Prostate gland (tissue), 2 donors: ENCODE measurements at regions of chr1 and their contacts with region 1.

Region 1: GRCh38 chr1:66331657-66332547 is 202.1 kb upstream of the SGIP1 start:
- DNase-seq: peak; percentile 85
- H3K4me3 ChIP-seq: peak overlapping the region; percentile 46 to 49
- H3K27ac ChIP-seq: peak overlapping the region; percentile 88
- H3K4me1 ChIP-seq: peaks cover 3% of the 10 kb centered on the region
- H3K27me3 ChIP-seq: no peaks in the 10 kb centered on the region
- CTCF ChIP-seq: peak in 2 of 4 experiments; percentile 50 to 52
- POLR2A ChIP-seq: peak; percentile 34

Region 2: GRCh38 chr1:66214901-66215300 is 117.0 kb before region 1 on chr1:
- intact Hi-C with region 1: no loop called
- DNase-seq: no peak
- H3K4me3 ChIP-seq: no peak overlapping the region
- H3K27ac ChIP-seq: no peak overlapping the region
- H3K4me1 ChIP-seq: no peaks in the 10 kb centered on the region
- H3K27me3 ChIP-seq: no peaks in the 10 kb centered on the region
- CTCF ChIP-seq: no peak
- POLR2A ChIP-seq: no peak

Region 3: DNA sequence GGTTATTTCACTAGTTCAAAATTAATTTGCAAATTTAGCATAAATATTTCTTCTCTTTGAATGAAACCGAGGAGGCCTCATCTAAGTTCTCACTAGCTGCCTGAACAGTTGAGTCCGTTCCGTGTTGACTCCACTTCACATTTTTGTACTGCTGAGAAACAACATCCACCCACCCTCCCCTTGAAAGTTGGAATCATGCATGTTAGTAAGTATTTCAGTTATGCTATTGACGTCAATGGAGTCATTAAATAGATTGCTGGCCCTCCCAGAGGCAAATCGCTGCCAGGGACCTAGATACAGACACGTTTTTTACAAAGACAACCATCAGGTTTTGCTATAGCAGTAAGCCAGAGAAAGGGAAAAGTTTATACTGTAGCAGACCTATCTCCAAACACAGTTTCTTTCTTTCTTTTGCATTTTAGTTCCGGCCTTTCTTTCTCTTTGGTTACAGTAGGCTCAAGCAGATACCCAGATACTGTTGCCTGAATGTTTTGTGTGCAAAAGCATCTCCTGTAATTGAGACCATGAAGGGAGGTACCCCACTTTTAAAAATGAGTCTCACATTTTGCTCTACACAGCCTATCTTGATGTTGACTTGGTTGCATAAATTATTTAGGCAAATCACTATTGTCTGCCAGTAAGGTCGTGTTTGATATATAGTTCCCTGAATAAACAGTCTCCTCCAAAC is 60.5 kb before region 1 on chr1:
- intact Hi-C with region 1: loop called (anchors 1 kb)
- DNase-seq: peak; percentile 92
- H3K4me3 ChIP-seq: no peak overlapping the region
- H3K27ac ChIP-seq: peak overlapping the region; percentile 77 to 81
- H3K4me1 ChIP-seq: peaks cover 9% of the 10 kb centered on the region
- H3K27me3 ChIP-seq: no peaks in the 10 kb centered on the region
- CTCF ChIP-seq: peak in 1 of 4 experiments; percentile 23
- POLR2A ChIP-seq: peak; percentile 29

Region 4: GRCh38 chr1:66685670-66686069 is 353.8 kb after region 1 on chr1:
- intact Hi-C with region 1: no loop called
- DNase-seq: no peak
- H3K4me3 ChIP-seq: no peak overlapping the region
- H3K27ac ChIP-seq: no peak overlapping the region
- H3K4me1 ChIP-seq: no peaks in the 10 kb centered on the region
- H3K27me3 ChIP-seq: no peaks in the 10 kb centered on the region
- CTCF ChIP-seq: no peak
- POLR2A ChIP-seq: no peak